Activated B cell treated with CpG ODN at 0.5 μM for 24 hours (primary cell): ENCODE measurements at regions of chr6 and their contacts with region 1.

Region 1: GRCh38 chr6:135251964-135252429 is 70.9 kb downstream of the MYB start:
- DNase-seq: no peak
- ATAC-seq: no peak
- H3K4me3 Mint-ChIP-seq: no peak overlapping the region
- H3K27ac Mint-ChIP-seq: no peak overlapping the region
- H3K4me1 Mint-ChIP-seq: peaks cover 19% of the 10 kb centered on the region
- H3K27me3 Mint-ChIP-seq: no peaks in the 10 kb centered on the region
- CTCF ChIP-seq: no peak

Region 2: GRCh38 chr6:133502441-133503259 is 1749.3 kb before region 1 on chr6:
- CTCF ChIA-PET with region 1: no interaction called
- POLR2A ChIA-PET with region 1: no interaction called
- intact Hi-C with region 1: no loop called
- DNase-seq: no peak
- ATAC-seq: no peak
- H3K4me3 Mint-ChIP-seq: no peak overlapping the region
- H3K27ac Mint-ChIP-seq: no peak overlapping the region
- H3K4me1 Mint-ChIP-seq: no peaks in the 10 kb centered on the region
- H3K27me3 Mint-ChIP-seq: peaks cover 5% of the 10 kb centered on the region
- CTCF ChIP-seq: no peak

Region 3: DNA sequence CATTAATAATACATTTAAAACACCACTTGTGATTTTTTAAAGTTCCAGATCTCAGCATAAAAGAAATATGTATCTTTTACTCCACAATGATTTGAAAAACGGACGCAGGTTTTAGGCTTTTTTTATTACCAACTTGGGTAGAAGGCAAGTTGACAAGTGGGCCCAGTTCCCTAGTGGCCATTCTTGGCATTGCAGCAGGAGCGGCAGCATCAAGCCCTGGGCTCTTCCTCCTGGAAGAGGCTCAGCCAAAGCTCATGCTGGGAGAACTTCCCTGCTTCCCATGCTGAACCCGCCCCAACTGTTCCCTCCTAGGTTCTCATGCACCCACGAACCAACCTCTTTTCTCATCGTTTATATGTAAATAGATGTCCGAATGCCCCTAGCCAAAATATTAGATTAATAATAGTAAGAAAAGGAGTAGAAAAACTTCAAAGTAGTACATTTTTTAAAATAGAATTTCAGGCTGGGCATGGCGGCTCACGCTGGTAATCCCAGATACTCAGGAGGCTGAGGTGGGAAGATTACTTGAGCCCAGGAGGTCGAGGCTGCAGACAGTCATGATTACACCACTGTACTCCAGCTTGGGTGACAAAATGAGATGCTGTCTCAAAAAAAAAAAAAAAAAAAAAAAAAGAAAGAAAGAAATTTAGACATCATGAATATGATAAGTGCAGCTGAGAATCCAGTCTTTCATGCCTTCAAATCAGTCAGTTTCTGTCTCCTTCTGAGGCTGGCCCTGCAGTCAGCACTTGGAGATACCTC is 89.1 kb before region 1 on chr6:
- CTCF ChIA-PET with region 1: no interaction called
- POLR2A ChIA-PET with region 1: interaction called, 11 read pairs
- intact Hi-C with region 1: no loop called
- DNase-seq: no peak
- ATAC-seq: peak; percentile 29
- H3K4me3 Mint-ChIP-seq: peak overlapping the region; percentile 25
- H3K27ac Mint-ChIP-seq: peak overlapping the region; percentile 79
- H3K4me1 Mint-ChIP-seq: peaks cover 20% of the 10 kb centered on the region
- H3K27me3 Mint-ChIP-seq: no peaks in the 10 kb centered on the region
- CTCF ChIP-seq: peak; percentile 40

Region 4: GRCh38 chr6:135176464-135176863 is 75.5 kb before region 1 on chr6:
- CTCF ChIA-PET with region 1: no interaction called
- POLR2A ChIA-PET with region 1: no interaction called
- intact Hi-C with region 1: no loop called
- DNase-seq: no peak
- ATAC-seq: no peak
- H3K4me3 Mint-ChIP-seq: no peak overlapping the region
- H3K27ac Mint-ChIP-seq: peak overlapping the region; percentile 18
- H3K4me1 Mint-ChIP-seq: peaks cover 22% of the 10 kb centered on the region
- H3K27me3 Mint-ChIP-seq: no peaks in the 10 kb centered on the region
- CTCF ChIP-seq: no peak

Region 5: DNA sequence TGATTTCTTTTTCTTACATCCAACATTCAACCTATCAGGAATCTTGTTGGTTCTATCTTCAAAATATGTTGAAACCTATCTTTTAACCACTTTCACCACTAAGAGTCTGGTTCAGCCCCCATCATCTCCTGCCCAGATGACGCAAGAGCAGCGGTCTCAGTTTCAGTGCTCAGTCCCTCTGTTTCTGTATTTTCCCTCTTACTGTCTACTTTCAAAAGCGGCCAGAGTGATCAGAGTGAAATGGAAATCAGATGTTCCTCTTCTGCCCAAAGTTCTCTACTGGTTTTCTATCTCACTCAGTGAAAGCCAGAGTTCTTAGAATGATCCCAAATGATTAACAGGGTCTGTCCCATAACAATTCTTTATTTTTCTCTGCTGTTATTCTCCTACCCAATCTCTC is 451.6 kb after region 1 on chr6:
- CTCF ChIA-PET with region 1: no interaction called
- POLR2A ChIA-PET with region 1: no interaction called
- intact Hi-C with region 1: no loop called
- DNase-seq: no peak
- ATAC-seq: no peak
- H3K4me3 Mint-ChIP-seq: no peak overlapping the region
- H3K27ac Mint-ChIP-seq: no peak overlapping the region
- H3K4me1 Mint-ChIP-seq: peaks cover 9% of the 10 kb centered on the region
- H3K27me3 Mint-ChIP-seq: peaks cover 3% of the 10 kb centered on the region
- CTCF ChIP-seq: no peak